Naive thymus-derived CD4-positive, alpha-beta T cell (primary cell): ENCODE measurements at regions of chr19 and their contacts with region 1.

Region 1: GRCh38 chr19:1406774-1407499 is 449 bp upstream of the DAZAP1 start:
- DNase-seq: peak; percentile 99 to 100 (median 100)
- ATAC-seq: peak; percentile 93
- H3K4me3 ChIP-seq: peak overlapping the region; percentile 40
- H3K4me3 Mint-ChIP-seq: peak overlapping the region; percentile 72 to 89 (median 80)
- H3K27ac ChIP-seq: peak overlapping the region; percentile 98
- H3K27ac Mint-ChIP-seq: peak overlapping the region; percentile 50 to 93 (median 85)
- H3K4me1 ChIP-seq: peaks cover 38 to 40% of the 10 kb centered on the region in 2 donors
- H3K4me1 Mint-ChIP-seq: peaks cover 33 to 53% (median 45%) of the 10 kb centered on the region in 7 donors
- H3K27me3 ChIP-seq: no peaks in the 10 kb centered on the region
- H3K27me3 Mint-ChIP-seq: peaks cover 0 to 9% (median 0%) of the 10 kb centered on the region in 5 donors

Region 2: DNA sequence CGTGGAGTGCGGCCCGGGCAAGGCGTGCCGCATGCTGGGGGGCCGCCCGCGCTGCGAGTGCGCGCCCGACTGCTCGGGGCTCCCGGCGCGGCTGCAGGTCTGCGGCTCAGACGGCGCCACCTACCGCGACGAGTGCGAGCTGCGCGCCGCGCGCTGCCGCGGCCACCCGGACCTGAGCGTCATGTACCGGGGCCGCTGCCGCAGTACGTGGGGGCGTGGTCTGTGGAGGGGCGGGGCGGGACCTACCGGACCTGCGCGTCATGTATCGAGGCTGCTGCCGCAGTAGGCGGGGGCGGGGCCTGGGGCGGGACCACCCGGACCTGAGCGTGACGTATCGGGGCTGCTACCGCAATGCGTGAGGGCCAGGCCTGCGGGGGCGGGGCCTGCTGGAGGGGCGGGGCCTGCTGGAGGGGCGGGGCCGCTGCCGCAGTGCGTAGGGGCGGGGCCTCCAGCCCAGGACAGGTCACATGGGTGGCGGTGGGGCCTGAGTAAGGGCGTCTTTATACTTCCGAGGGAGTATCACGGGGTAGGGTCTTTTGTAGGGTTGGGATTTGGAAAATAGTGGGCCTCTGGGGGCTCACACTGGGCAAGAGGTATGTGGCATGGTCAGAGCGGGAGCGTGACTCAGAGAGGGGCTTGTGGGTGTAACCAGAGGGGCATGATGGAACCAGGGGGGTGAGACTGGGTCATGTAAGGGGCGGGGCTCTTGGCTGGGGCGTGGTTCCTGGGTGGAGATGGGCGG is 726.5 kb before region 1 on chr19:
- CTCF ChIA-PET with region 1: no interaction called
- POLR2A ChIA-PET with region 1: no interaction called
- intact Hi-C with region 1: loop called in 1 of 2 experiments (anchors 1 kb)
- DNase-seq: peak; percentile 94 to 100 (median 97)
- ATAC-seq: peak; percentile 91
- H3K4me3 ChIP-seq: peak overlapping the region; percentile 78
- H3K4me3 Mint-ChIP-seq: peak overlapping the region; percentile 77 to 95 (median 92)
- H3K27ac ChIP-seq: peak overlapping the region; percentile 82
- H3K27ac Mint-ChIP-seq: peak overlapping the region; percentile 89 to 100 (median 98)
- H3K4me1 ChIP-seq: peaks cover 5 to 12% of the 10 kb centered on the region in 2 donors
- H3K4me1 Mint-ChIP-seq: peaks cover 0 to 8% (median 2%) of the 10 kb centered on the region in 7 donors
- H3K27me3 ChIP-seq: peaks cover 0 to 2% of the 10 kb centered on the region in 2 donors
- H3K27me3 Mint-ChIP-seq: peaks cover under 1 to 10% (median under 1%) of the 10 kb centered on the region in 5 donors

Region 3: DNA sequence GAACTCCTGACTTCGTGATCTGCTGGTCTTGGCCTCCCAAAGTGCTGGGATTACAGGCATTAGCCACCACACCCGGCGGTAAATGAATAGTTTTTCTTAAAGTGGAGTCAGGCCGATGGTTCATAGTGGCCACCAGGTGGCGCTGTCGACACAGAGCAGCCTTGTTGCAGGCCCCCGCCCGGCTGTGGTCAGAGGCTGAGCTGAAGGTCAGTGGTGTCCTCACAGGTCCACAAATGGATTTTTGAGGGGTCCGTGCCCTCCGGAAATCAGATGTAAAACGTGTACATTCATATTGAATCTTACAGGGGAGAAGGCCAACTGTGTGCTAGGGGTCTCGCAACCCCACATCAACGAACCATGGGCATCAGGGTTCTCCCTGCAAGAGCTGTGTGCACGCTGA is 436.2 kb before region 1 on chr19:
- CTCF ChIA-PET with region 1: no interaction called
- POLR2A ChIA-PET with region 1: no interaction called
- intact Hi-C with region 1: no loop called
- DNase-seq: no peak
- ATAC-seq: no peak
- H3K4me3 ChIP-seq: no peak overlapping the region
- H3K4me3 Mint-ChIP-seq: no peak overlapping the region
- H3K27ac ChIP-seq: no peak overlapping the region
- H3K27ac Mint-ChIP-seq: peak overlapping the region in 4 of 9 donors; percentile 29 to 90 (median 64)
- H3K4me1 ChIP-seq: no peaks in the 10 kb centered on the region
- H3K4me1 Mint-ChIP-seq: no peaks in the 10 kb centered on the region
- H3K27me3 ChIP-seq: no peaks in the 10 kb centered on the region
- H3K27me3 Mint-ChIP-seq: no peaks in the 10 kb centered on the region

Region 4: DNA sequence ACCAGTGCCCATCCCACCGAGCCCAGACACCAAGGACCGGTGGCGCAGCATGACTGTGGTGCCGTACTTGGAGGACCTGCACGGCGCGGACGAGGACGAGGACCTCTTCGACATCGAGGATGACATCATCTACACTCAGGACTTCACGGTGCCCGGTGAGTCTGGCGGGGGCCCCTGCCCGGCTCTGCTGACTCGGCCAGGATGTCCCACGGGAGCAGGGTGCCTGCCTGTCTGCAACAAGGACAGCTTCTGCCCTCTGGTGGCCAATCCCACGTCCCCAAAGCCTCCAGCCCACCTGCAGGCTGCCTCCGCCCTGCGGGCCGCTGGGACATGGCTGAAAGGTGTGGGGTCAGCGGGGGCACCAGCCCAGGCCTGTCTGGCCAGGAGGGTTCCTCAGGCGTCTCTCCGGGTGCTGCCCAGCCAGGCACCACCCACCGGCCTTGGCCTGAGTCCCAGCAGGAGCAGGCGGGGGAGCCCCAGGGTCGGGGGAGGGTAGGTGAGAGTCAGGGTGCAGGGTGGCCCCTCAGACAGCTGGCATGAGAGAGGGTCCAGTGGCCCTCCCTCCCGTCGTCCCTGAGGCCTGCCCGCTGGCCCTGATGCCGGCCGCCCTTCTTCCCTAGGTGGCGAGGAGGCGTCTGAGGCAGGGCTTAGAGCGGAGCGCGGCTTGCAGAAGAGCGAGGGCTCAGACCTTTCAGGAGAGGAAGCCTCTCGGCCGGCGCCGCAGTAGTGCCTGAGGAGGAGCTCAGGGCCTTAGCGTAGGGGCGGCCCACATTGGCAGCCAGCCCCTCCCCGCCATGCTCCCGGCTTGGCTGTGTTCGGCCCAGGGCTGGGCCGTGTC is 183.7 kb before region 1 on chr19:
- CTCF ChIA-PET with region 1: no interaction called
- POLR2A ChIA-PET with region 1: no interaction called
- intact Hi-C with region 1: no loop called
- DNase-seq: peak in 1 of 9 donors; percentile 27
- ATAC-seq: peak; percentile 26
- H3K4me3 ChIP-seq: no peak overlapping the region
- H3K4me3 Mint-ChIP-seq: no peak overlapping the region
- H3K27ac ChIP-seq: no peak overlapping the region
- H3K27ac Mint-ChIP-seq: no peak overlapping the region
- H3K4me1 ChIP-seq: no peaks in the 10 kb centered on the region
- H3K4me1 Mint-ChIP-seq: no peaks in the 10 kb centered on the region
- H3K27me3 ChIP-seq: no peaks in the 10 kb centered on the region
- H3K27me3 Mint-ChIP-seq: no peaks in the 10 kb centered on the region

Region 5: GRCh38 chr19:1249298-1249989 is 157.5 kb before region 1 on chr19:
- CTCF ChIA-PET with region 1: no interaction called
- POLR2A ChIA-PET with region 1: no interaction called
- intact Hi-C with region 1: loop called (anchors 1 to 10 kb)
- DNase-seq: peak; percentile 88 to 97 (median 94)
- ATAC-seq: peak; percentile 74
- H3K4me3 ChIP-seq: peak overlapping the region; percentile 63
- H3K4me3 Mint-ChIP-seq: peak overlapping the region; percentile 80 to 95 (median 88)
- H3K27ac ChIP-seq: peak overlapping the region; percentile 94
- H3K27ac Mint-ChIP-seq: peak overlapping the region; percentile 62 to 95 (median 89)
- H3K4me1 ChIP-seq: peaks cover 22 to 27% of the 10 kb centered on the region in 2 donors
- H3K4me1 Mint-ChIP-seq: peaks cover 0 to 11% (median 10%) of the 10 kb centered on the region in 7 donors
- H3K27me3 ChIP-seq: no peaks in the 10 kb centered on the region
- H3K27me3 Mint-ChIP-seq: no peaks in the 10 kb centered on the region

Region 6: DNA sequence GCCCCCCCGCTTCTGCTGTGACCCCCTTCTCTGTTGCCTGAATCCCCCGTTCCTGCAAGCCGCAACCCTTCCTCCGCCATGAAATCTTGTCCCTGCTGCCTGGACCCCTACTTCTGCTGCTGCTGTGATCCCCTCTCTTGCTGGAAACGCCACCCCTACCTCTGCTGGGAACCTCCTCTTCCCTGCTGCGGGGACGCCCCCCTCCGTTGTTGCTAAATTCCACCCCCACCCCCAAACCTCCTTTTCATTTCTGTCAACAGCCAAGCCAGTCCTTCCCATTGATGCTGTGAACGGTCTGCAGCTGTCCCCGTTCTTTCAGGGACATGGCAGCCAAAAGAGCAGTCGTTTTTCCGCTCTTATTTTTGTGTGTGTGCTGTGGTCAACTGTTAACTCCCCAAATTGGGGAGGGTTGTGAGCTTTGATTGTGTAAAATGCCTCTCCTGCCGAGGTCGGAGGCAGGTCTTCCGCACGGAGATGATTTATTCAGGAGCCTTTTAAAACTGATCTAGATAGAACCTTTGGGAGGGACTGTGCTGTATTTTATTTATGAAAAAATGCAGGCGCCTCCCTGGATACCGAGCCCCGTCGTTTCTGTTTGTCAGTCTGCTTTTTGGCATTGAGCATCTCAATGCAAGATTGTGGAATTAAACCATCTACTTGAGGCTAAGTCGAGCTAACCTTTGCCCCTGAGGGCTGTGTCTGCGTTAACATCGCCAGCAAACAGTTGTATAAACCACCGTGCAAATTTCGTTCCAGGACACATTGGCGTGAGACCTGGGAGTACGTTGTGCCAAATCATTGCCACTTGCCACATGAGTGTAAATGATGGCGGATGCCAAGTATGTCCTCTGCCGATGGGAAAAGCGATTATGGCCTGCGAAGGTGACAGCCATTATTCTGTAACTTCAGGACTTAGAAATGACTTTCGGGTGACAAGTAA is 51.1 kb before region 1 on chr19:
- CTCF ChIA-PET with region 1: no interaction called
- POLR2A ChIA-PET with region 1: no interaction called
- intact Hi-C with region 1: loop called in 1 of 2 experiments (anchors 1 kb)
- DNase-seq: no peak
- ATAC-seq: no peak
- H3K4me3 ChIP-seq: peak overlapping the region; percentile 60
- H3K4me3 Mint-ChIP-seq: peak overlapping the region; percentile 74 to 98 (median 90)
- H3K27ac ChIP-seq: peak overlapping the region; percentile 59
- H3K27ac Mint-ChIP-seq: peak overlapping the region in 8 of 9 donors; percentile 50 to 86 (median 78)
- H3K4me1 ChIP-seq: peaks cover 5 to 6% of the 10 kb centered on the region in 2 donors
- H3K4me1 Mint-ChIP-seq: peaks cover 9 to 24% (median 18%) of the 10 kb centered on the region in 7 donors
- H3K27me3 ChIP-seq: no peaks in the 10 kb centered on the region
- H3K27me3 Mint-ChIP-seq: no peaks in the 10 kb centered on the region

Region 7: DNA sequence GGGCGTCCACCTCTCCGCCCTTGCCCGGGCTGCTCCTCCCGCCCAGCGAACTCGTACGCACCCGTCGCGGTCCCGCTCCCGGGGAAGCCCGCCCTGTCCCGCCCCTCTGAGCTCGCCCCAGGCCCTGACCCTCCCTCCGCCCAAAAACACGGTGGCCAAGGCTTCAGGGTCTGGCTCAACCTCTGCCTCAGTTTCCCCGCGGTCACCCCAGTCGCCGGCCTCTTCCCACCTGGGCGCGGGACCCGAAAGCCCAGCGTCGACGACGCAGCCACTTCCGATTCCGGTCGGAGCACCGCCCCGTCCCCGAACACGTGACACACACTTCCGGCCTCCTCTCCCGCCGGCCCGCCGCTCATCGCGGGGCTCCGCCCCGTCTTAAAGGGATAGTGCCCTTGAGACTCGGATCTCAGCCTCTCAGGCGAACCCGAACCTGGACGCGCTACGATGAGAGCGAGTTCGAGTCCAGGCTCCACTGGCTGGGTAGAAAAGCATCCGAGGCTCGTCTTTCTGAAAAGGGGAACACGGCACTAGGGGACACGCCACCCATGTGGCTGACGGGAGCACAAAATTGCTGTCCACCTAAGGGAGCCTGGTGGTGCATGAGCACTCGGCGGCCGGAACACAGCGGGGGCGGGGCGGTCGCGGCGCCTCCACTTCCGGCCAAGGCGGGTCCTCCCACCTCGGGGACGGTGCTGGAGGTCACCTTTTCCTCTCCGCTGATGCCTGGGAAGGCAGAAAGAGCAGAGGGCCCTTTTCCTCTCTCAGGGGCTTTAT is 72.2 kb after region 1 on chr19 and contains the start of gene C19orf25:
- CTCF ChIA-PET with region 1: interaction called, 4 read pairs
- POLR2A ChIA-PET with region 1: no interaction called
- intact Hi-C with region 1: loop called in 1 of 2 experiments (anchors 2 kb)
- DNase-seq: peak; percentile 81 to 94 (median 88)
- ATAC-seq: peak; percentile 98
- H3K4me3 ChIP-seq: peak within 1 kb of the TSS; percentile 82
- H3K4me3 Mint-ChIP-seq: peak within 1 kb of the TSS; percentile 96 to 100 (median 98)
- H3K27ac ChIP-seq: peak within 1 kb of the TSS; percentile 86
- H3K27ac Mint-ChIP-seq: peak within 1 kb of the TSS; percentile 94 to 98 (median 96)
- H3K4me1 ChIP-seq: peaks cover 6 to 12% of the 10 kb centered on the region in 2 donors
- H3K4me1 Mint-ChIP-seq: peaks cover 11 to 24% (median 15%) of the 10 kb centered on the region in 7 donors
- H3K27me3 ChIP-seq: no peaks in the 10 kb centered on the region
- H3K27me3 Mint-ChIP-seq: peaks cover 0 to 3% (median 0%) of the 10 kb centered on the region in 5 donors
- total RNA-seq, gene C19orf25: 24.2 to 64.5 (median 44.6) TPM

Region 8: DNA sequence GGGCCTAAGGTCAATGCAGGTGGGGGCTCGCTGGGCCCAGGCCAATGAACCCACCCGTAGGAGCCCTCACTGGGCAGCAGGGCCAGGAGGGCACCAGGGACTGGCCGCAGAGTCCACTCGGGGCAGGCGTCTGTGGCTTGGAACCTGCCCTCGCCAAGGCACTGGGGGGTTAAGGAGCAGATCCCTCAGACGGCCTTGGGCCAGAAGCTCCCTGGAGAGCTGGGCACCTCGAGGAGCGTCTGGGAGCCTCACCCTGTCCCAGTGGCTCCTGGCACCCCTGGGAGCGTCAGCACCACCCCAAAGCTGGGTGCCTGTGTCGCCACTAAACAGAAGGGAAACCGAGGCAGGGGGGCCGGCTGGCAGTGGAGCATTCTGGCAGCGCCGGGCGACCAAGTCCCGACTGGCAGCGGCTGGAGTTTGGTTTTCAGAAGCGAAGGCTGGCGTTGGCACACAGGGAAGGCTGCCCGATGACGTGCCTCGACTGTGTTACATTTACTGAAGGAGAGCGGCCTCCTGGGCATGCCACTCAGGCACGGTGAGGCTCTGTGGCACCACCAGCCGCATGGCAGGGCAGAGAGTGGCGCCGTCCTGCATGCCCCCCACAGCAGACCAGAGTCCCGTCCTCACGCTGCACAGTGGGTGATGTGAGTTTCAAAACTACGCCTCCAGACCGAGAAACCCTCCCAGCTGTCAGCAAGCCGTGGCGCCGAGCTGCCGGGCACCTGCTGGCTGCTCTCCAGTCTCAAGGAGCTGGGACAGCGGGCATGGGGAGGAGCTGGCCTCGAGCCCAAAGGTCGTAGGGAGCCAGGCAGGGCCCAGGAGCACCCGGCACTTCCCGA is 170.4 kb after region 1 on chr19:
- CTCF ChIA-PET with region 1: no interaction called
- POLR2A ChIA-PET with region 1: no interaction called
- intact Hi-C with region 1: no loop called
- DNase-seq: no peak
- ATAC-seq: no peak
- H3K4me3 ChIP-seq: no peak overlapping the region
- H3K4me3 Mint-ChIP-seq: no peak overlapping the region
- H3K27ac ChIP-seq: no peak overlapping the region
- H3K27ac Mint-ChIP-seq: no peak overlapping the region
- H3K4me1 ChIP-seq: no peaks in the 10 kb centered on the region
- H3K4me1 Mint-ChIP-seq: peaks cover 0 to 5% (median 0%) of the 10 kb centered on the region in 7 donors
- H3K27me3 ChIP-seq: no peaks in the 10 kb centered on the region
- H3K27me3 Mint-ChIP-seq: no peaks in the 10 kb centered on the region

Region 9: GRCh38 chr19:1592755-1593500 is 186.0 kb after region 1 on chr19 and contains the start of gene MBD3:
- CTCF ChIA-PET with region 1: no interaction called
- POLR2A ChIA-PET with region 1: no interaction called
- intact Hi-C with region 1: loop called (anchors 1 kb)
- DNase-seq: peak; percentile 81 to 92 (median 88)
- ATAC-seq: peak; percentile 92
- H3K4me3 ChIP-seq: peak within 1 kb of the TSS; percentile 86
- H3K4me3 Mint-ChIP-seq: peak within 1 kb of the TSS; percentile 84 to 92 (median 90)
- H3K27ac ChIP-seq: peak within 1 kb of the TSS; percentile 99
- H3K27ac Mint-ChIP-seq: peak within 1 kb of the TSS; percentile 79 to 95 (median 91)
- H3K4me1 ChIP-seq: peaks cover 10 to 16% of the 10 kb centered on the region in 2 donors
- H3K4me1 Mint-ChIP-seq: peaks cover 8 to 22% (median 15%) of the 10 kb centered on the region in 7 donors
- H3K27me3 ChIP-seq: no peaks in the 10 kb centered on the region
- H3K27me3 Mint-ChIP-seq: no peaks in the 10 kb centered on the region
- total RNA-seq, gene MBD3: 50.1 to 87.8 (median 64.6) TPM

Region 10: GRCh38 chr19:1825909-1826556 is 419.1 kb after region 1 on chr19:
- CTCF ChIA-PET with region 1: no interaction called
- POLR2A ChIA-PET with region 1: no interaction called
- intact Hi-C with region 1: no loop called
- DNase-seq: peak; percentile 55 to 81 (median 71)
- ATAC-seq: peak; percentile 85
- H3K4me3 ChIP-seq: no peak overlapping the region
- H3K4me3 Mint-ChIP-seq: no peak overlapping the region
- H3K27ac ChIP-seq: no peak overlapping the region
- H3K27ac Mint-ChIP-seq: peak overlapping the region in 2 of 9 donors; percentile 5 to 71
- H3K4me1 ChIP-seq: peaks cover 3 to 6% of the 10 kb centered on the region in 2 donors
- H3K4me1 Mint-ChIP-seq: peaks cover 0 to 5% (median 0%) of the 10 kb centered on the region in 7 donors
- H3K27me3 ChIP-seq: no peaks in the 10 kb centered on the region
- H3K27me3 Mint-ChIP-seq: no peaks in the 10 kb centered on the region

Region 11: DNA sequence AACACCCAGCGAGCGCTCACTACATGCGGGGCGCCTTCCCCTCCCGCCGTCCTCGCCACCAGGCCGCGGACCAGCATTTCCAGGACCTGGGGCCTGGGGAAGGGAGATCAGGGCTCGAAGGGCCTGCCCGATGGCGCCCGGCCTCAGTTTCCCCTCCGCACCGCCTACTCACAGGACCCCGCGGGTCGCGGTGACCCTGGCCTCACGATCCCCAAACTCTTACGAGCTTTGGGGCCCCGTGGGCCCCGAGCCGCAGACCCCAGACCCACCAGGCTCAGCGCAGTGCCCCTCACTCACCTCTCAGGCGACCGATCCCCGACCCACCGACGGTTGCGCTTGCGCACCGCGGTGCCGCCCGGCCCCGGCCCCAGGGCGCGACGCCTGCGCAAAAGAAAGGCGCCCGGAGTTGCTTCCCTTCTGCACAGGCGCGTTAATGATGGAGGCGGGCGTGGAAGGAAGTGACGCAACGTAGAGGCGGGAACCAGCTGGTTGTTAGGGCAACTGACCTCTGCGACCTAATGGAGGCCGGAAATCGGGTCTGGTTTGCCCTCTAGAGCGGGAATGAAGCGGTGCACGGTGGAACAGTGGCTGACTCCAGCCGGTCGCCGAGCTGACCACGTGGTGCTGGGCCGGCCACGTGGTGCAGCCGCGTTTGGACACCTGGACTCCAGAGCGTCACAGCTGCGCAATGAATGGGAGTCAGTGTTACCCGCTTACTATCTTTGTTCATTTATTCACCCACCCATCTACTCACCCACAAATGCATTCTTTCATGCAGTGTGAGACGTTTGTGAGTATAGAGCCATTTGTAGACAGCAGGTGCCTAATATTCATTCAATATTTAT is 1376.2 kb after region 1 on chr19 and contains the start of gene SGTA:
- CTCF ChIA-PET with region 1: no interaction called
- POLR2A ChIA-PET with region 1: no interaction called
- intact Hi-C with region 1: loop called in 1 of 2 experiments (anchors 5 kb)
- DNase-seq: peak; percentile 82 to 97 (median 95)
- ATAC-seq: peak; percentile 73
- H3K4me3 ChIP-seq: peak within 1 kb of the TSS; percentile 90
- H3K4me3 Mint-ChIP-seq: peak within 1 kb of the TSS; percentile 83 to 98 (median 88)
- H3K27ac ChIP-seq: peak within 1 kb of the TSS; percentile 95
- H3K27ac Mint-ChIP-seq: peak within 1 kb of the TSS; percentile 78 to 97 (median 92)
- H3K4me1 ChIP-seq: peaks cover 33 to 35% of the 10 kb centered on the region in 2 donors
- H3K4me1 Mint-ChIP-seq: peaks cover 29 to 64% (median 51%) of the 10 kb centered on the region in 7 donors
- H3K27me3 ChIP-seq: no peaks in the 10 kb centered on the region
- H3K27me3 Mint-ChIP-seq: no peaks in the 10 kb centered on the region
- total RNA-seq, gene SGTA: 32.2 to 47.8 (median 37.9) TPM